ENCODE measurements at regions of chr12 and their contacts with region 1.

Region 1: DNA sequence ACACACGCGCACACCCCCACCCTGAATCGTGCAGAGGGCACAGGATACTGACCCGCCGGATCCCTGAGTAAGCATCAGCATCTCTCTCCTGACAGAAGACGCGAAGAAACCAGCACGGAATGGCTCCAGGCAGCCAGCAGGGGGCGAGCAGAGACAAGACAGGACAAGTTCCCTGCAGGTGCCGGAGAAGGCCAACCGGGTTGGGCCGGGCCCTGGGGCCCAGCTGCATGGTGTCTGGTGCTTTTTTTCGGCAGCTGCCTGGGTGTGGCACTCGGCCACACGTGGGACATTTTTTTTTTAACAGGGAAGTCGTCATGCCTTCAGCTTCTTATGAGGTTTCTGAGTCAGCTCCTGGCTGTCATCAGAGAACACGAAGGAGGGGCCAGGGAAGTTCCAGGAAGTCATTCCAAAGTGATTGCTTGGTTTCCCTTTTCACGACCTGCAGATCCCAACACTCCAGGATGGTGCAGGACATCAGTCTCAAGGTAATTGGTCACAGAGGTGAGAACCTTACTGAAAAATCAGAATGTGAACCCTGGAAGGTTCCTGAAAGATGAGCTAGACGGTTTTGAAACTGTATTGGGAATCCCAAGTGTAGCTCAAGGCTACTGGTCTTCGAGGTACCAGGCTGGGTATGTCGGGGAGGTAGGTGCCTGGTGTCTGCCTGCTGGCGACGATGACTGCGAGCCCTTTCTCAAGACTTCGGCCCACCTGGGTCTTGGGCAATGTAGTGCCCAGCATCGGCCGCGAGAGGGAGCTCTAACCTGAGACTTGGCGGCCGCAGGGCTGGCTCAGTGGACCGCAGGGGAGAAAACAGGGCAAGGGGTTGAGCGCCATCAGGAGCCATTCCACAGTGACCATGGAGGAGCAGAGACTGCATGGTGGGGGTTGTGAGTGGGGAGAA is 190.8 kb upstream of the PRMT8 start:
- DNase-seq: peak; percentile 44 to 76 (median 68)
- ATAC-seq: peak; percentile 84
- H3K4me3 ChIP-seq: peak overlapping the region; percentile 19
- H3K4me3 Mint-ChIP-seq: peak overlapping the region; percentile 45 to 87 (median 78)
- H3K27ac ChIP-seq: no peak overlapping the region
- H3K27ac Mint-ChIP-seq: peak overlapping the region in 5 of 9 donors; percentile 34 to 85 (median 48)
- H3K4me1 ChIP-seq: peaks cover 7 to 9% of the 10 kb centered on the region in 2 donors
- H3K4me1 Mint-ChIP-seq: peaks cover 9 to 14% (median 12%) of the 10 kb centered on the region in 7 donors
- H3K27me3 ChIP-seq: no peaks in the 10 kb centered on the region
- H3K27me3 Mint-ChIP-seq: peaks cover 0 to 15% (median 6%) of the 10 kb centered on the region in 5 donors

Region 2: GRCh38 chr12:3135522-3136461 is 164.4 kb before region 1 on chr12:
- CTCF ChIA-PET with region 1: no interaction called
- POLR2A ChIA-PET with region 1: no interaction called
- intact Hi-C with region 1: no loop called
- DNase-seq: peak in 8 of 9 donors; percentile 18 to 55 (median 38)
- ATAC-seq: peak; percentile 69
- H3K4me3 ChIP-seq: no peak overlapping the region
- H3K4me3 Mint-ChIP-seq: no peak overlapping the region
- H3K27ac ChIP-seq: no peak overlapping the region
- H3K27ac Mint-ChIP-seq: no peak overlapping the region
- H3K4me1 ChIP-seq: no peaks in the 10 kb centered on the region
- H3K4me1 Mint-ChIP-seq: peaks cover 2 to 7% (median 3%) of the 10 kb centered on the region in 7 donors
- H3K27me3 ChIP-seq: peaks cover 0 to 9% of the 10 kb centered on the region in 2 donors
- H3K27me3 Mint-ChIP-seq: peaks cover 22 to 56% (median 46%) of the 10 kb centered on the region in 5 donors

Region 3: DNA sequence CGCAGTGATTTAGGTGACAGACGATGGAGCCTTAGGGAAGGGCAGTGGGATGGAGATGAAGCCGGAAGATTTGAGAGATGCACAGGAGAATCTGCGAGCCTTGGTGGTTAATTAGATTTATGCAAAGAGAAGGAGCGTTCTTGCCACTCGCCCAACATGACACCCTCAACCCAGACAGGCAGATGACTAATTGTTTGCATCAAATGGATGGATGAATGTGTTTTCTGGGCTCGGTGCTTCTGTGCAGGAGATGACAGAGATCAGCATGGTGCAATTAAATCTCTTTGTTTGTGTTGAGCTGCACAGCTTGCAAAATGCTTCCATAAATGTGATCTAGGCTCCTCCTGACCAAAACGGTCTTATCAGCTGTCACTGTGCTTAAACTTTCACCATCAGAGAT is 11.5 kb before region 1 on chr12:
- CTCF ChIA-PET with region 1: interaction called, 15 read pairs
- POLR2A ChIA-PET with region 1: no interaction called
- intact Hi-C with region 1: no loop called
- DNase-seq: no peak
- ATAC-seq: no peak
- H3K4me3 ChIP-seq: no peak overlapping the region
- H3K4me3 Mint-ChIP-seq: no peak overlapping the region
- H3K27ac ChIP-seq: no peak overlapping the region
- H3K27ac Mint-ChIP-seq: no peak overlapping the region
- H3K4me1 ChIP-seq: no peaks in the 10 kb centered on the region
- H3K4me1 Mint-ChIP-seq: no peaks in the 10 kb centered on the region
- H3K27me3 ChIP-seq: no peaks in the 10 kb centered on the region
- H3K27me3 Mint-ChIP-seq: peaks cover 0 to 5% (median 0%) of the 10 kb centered on the region in 5 donors

Region 4: GRCh38 chr12:3313675-3314663 is 13.8 kb after region 1 on chr12:
- CTCF ChIA-PET with region 1: interaction called, 16 read pairs
- POLR2A ChIA-PET with region 1: no interaction called
- intact Hi-C with region 1: no loop called
- DNase-seq: peak in 3 of 9 donors; percentile 12 to 16 (median 16)
- ATAC-seq: no peak
- H3K4me3 ChIP-seq: no peak overlapping the region
- H3K4me3 Mint-ChIP-seq: no peak overlapping the region
- H3K27ac ChIP-seq: no peak overlapping the region
- H3K27ac Mint-ChIP-seq: peak overlapping the region in 1 of 9 donors; percentile 51
- H3K4me1 ChIP-seq: no peaks in the 10 kb centered on the region
- H3K4me1 Mint-ChIP-seq: no peaks in the 10 kb centered on the region
- H3K27me3 ChIP-seq: no peaks in the 10 kb centered on the region
- H3K27me3 Mint-ChIP-seq: peaks cover 0 to 8% (median 5%) of the 10 kb centered on the region in 5 donors

Region 5: GRCh38 chr12:3658327-3659163 is 358.4 kb after region 1 on chr12:
- CTCF ChIA-PET with region 1: interaction called, 3 read pairs
- POLR2A ChIA-PET with region 1: no interaction called
- intact Hi-C with region 1: loop called (anchors 5 to 10 kb)
- DNase-seq: peak in 6 of 9 donors; percentile 12 to 51 (median 35)
- ATAC-seq: peak; percentile 48
- H3K4me3 ChIP-seq: no peak overlapping the region
- H3K4me3 Mint-ChIP-seq: no peak overlapping the region
- H3K27ac ChIP-seq: no peak overlapping the region
- H3K27ac Mint-ChIP-seq: peak overlapping the region in 1 of 9 donors; percentile 58
- H3K4me1 ChIP-seq: no peaks in the 10 kb centered on the region
- H3K4me1 Mint-ChIP-seq: peaks cover 0 to 3% (median 0%) of the 10 kb centered on the region in 7 donors
- H3K27me3 ChIP-seq: no peaks in the 10 kb centered on the region
- H3K27me3 Mint-ChIP-seq: no peaks in the 10 kb centered on the region

Region 6: DNA sequence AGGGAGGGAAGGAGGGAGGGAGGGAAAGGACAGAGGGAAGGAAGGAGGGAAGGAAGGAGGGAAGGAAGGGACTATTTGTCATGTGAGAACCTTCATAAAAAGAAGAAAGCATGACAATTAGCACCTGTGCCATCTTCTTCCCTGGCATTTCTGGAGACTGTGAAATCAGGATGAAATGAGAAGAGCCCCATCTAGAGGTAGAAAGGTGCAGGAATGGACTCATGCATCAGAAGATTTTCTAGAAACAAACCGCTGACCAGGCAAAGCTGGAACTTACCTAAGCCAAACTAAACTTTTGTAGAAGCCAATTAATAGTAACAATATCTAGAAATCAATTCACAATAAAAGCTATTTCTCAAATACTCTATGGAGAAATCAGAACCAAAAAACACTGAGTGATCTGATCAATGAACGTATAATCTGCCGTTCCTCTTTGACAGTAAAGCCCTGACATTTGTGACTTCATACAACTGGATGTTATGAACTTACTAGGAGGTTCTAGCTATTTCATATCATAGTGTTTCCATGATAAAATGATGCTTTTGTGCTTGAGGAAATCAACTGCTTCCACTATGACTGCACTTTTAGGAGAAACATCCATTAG is 477.1 kb after region 1 on chr12:
- CTCF ChIA-PET with region 1: interaction called, 14 read pairs
- POLR2A ChIA-PET with region 1: no interaction called
- intact Hi-C with region 1: loop called (anchors 1 kb)
- DNase-seq: peak in 6 of 9 donors; percentile 26 to 46 (median 33)
- ATAC-seq: peak; percentile 52
- H3K4me3 ChIP-seq: no peak overlapping the region
- H3K4me3 Mint-ChIP-seq: no peak overlapping the region
- H3K27ac ChIP-seq: no peak overlapping the region
- H3K27ac Mint-ChIP-seq: no peak overlapping the region
- H3K4me1 ChIP-seq: no peaks in the 10 kb centered on the region
- H3K4me1 Mint-ChIP-seq: peaks cover 3 to 10% (median 5%) of the 10 kb centered on the region in 7 donors
- H3K27me3 ChIP-seq: no peaks in the 10 kb centered on the region
- H3K27me3 Mint-ChIP-seq: peaks cover 0 to 4% (median 0%) of the 10 kb centered on the region in 5 donors

Region 7: DNA sequence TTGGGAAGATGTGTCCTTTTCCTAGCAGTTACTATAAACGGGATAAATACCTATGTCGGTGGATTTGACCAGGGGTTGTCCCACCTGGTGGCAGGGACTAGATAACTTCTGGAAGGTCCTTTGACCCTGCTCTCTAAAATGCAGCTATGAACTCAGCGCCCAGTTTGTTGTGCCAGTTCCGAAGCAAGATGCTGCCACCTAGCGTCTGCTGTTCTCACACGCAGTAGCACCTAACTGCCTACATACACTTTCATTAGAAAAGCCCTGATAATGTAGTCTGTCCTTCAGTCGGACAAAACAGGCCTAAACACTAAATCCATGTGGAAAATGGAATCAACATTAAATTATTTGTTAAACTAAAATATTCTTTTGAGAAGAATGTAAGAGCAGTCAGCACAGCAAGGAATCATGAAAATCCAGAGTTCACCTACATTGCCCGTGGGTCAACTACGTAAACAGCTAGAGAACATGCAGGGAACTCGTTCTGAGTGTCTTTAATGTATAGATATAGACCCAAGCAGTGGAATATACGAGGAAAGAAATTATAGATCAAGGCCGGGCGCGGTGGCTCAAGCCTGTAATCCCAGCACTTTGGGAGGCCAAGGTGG is 503.8 kb after region 1 on chr12:
- CTCF ChIA-PET with region 1: interaction called, 45 read pairs
- POLR2A ChIA-PET with region 1: no interaction called
- intact Hi-C with region 1: loop called (anchors 1 kb)
- DNase-seq: peak; percentile 27 to 63 (median 55)
- ATAC-seq: peak; percentile 82
- H3K4me3 ChIP-seq: no peak overlapping the region
- H3K4me3 Mint-ChIP-seq: no peak overlapping the region
- H3K27ac ChIP-seq: no peak overlapping the region
- H3K27ac Mint-ChIP-seq: no peak overlapping the region
- H3K4me1 ChIP-seq: no peaks in the 10 kb centered on the region
- H3K4me1 Mint-ChIP-seq: peaks cover 0 to 9% (median 0%) of the 10 kb centered on the region in 7 donors
- H3K27me3 ChIP-seq: no peaks in the 10 kb centered on the region
- H3K27me3 Mint-ChIP-seq: no peaks in the 10 kb centered on the region

Region 8: DNA sequence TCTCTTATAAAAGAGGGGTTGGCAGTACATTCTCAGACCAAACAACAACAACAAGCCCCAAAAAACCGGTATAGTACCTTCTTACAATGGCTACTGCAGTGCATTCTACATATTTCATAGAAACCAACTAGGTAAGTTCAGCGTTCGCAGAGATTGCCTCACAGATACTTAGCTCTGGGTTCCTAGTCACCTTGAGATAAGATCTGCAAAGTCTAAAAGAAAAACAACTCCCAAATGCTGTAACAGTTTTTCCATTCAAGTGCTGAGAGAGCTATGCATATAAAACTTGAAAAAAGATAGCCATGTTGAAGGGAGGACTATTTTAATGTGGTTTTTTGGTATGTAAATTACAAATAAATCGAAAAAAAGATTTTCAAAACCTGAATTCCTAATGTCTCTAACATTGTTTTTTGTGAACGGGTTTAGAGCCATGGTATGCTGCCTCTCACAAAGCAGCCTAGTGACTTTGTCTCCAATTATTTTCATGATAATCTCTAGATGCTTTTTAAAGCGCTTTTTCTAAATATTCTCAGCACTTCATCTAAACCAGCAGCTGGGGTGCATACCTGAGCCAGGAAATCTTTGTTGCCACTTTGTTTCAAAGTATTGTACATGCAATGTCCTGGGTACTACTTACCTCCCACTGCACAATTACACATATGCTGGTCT is 509.3 kb after region 1 on chr12:
- CTCF ChIA-PET with region 1: interaction called, 45 read pairs
- POLR2A ChIA-PET with region 1: no interaction called
- intact Hi-C with region 1: loop called (anchors 1 kb)
- DNase-seq: no peak
- ATAC-seq: no peak
- H3K4me3 ChIP-seq: no peak overlapping the region
- H3K4me3 Mint-ChIP-seq: no peak overlapping the region
- H3K27ac ChIP-seq: no peak overlapping the region
- H3K27ac Mint-ChIP-seq: peak overlapping the region in 7 of 9 donors; percentile 13 to 70 (median 58)
- H3K4me1 ChIP-seq: no peaks in the 10 kb centered on the region
- H3K4me1 Mint-ChIP-seq: peaks cover 5 to 32% (median 17%) of the 10 kb centered on the region in 7 donors
- H3K27me3 ChIP-seq: no peaks in the 10 kb centered on the region
- H3K27me3 Mint-ChIP-seq: no peaks in the 10 kb centered on the region

Measured in naive thymus-derived CD4-positive, alpha-beta T cell (primary cell).